B cell (primary cell): ENCODE measurements at regions of chr3 and their contacts with region 1.

Region 1: DNA sequence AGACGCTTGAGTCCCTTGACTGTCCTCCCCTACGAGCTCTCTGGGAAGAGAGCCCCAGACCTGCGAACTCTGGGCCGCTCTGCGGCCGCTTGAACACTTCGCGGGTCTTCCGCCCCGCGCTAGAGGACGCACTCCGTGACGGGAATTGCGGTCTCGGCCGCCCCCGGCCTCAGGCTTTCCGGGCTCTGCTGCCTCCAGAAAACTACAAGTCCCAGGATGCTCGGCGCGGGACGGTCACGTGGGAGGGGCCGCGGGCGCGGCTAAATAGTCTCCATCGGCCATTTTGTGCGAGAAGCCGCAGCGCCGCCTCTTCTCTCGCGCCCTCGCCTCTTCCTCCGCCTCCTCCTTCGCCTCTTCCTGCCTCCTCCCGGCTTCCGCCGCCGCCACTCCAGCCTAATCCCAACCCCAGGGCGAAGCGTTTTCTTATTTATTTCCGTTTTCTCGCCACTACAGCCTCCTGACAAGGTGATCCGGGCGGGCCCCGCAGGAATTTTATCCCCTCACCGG is at the start of gene EIF1B:
- DNase-seq: peak; percentile 98
- ATAC-seq: peak; percentile 87
- H3K4me3 ChIP-seq: peak within 1 kb of the TSS; percentile 77 to 98 (median 90)
- H3K4me3 Mint-ChIP-seq: peak within 1 kb of the TSS; percentile 96
- H3K27ac ChIP-seq: peak within 1 kb of the TSS; percentile 96 to 97
- H3K27ac Mint-ChIP-seq: peak within 1 kb of the TSS; percentile 99
- H3K4me1 ChIP-seq: peaks cover 15 to 20% of the 10 kb centered on the region in 2 donors
- H3K4me1 Mint-ChIP-seq: peaks cover 34% of the 10 kb centered on the region
- H3K27me3 ChIP-seq: no peaks in the 10 kb centered on the region
- H3K27me3 Mint-ChIP-seq: no peaks in the 10 kb centered on the region
- CTCF ChIP-seq: peak; percentile 90
- total RNA-seq, gene EIF1B: 70.6 and 78.1 TPM in 2 replicates

Region 2: DNA sequence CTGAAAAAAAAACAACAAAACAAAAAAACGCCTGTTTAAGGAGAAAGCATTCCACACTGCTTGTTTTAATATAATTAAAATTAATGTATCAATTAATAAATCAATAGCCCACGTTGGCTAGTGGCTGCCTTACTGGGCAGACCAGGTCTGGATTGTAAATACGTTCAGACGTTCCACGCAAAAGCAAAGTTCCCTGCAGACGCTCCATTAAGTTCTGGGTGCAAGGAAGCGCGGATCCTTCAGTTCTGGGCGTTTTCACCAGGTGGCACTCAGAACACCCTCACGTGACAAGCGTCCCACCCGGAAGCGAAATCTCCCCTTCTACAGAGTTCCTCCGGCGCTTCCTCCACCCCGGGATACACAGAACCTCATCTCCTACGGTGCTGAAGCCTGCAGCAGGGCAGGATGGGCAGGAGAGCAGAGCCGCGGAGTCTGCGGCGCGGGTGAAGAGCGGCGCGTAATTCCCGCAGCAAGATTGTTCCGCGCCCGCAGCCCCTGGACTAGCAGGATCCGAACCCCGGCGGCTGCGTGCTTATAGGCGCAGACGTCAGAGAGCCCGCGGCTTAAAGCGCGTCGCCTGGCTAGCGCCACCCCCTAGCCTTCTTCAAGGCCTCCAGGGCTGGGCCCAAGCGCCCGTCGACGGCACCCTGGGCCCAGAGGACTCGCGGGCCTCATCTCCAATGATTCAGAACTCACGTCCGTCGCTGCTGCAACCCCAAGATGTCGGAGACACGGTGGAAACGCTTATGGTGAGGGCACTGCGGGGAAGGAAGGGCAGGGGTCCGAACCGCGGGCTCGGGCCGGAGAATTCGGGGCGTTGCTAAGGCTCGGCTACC is 926.2 kb before region 1 on chr3 and contains the start of gene SLC25A38:
- CTCF ChIA-PET with region 1: no interaction called
- POLR2A ChIA-PET with region 1: no interaction called
- intact Hi-C with region 1: loop called (anchors 1 kb)
- DNase-seq: peak; percentile 93
- ATAC-seq: peak; percentile 71
- H3K4me3 ChIP-seq: peak within 1 kb of the TSS; percentile 4 to 91 (median 83)
- H3K4me3 Mint-ChIP-seq: peak within 1 kb of the TSS; percentile 98
- H3K27ac ChIP-seq: peak within 1 kb of the TSS; percentile 94 to 96
- H3K27ac Mint-ChIP-seq: peak within 1 kb of the TSS; percentile 99
- H3K4me1 ChIP-seq: peaks cover 43 to 50% of the 10 kb centered on the region in 2 donors
- H3K4me1 Mint-ChIP-seq: peaks cover 42% of the 10 kb centered on the region
- H3K27me3 ChIP-seq: no peaks in the 10 kb centered on the region
- H3K27me3 Mint-ChIP-seq: no peaks in the 10 kb centered on the region
- CTCF ChIP-seq: peak; percentile 60
- total RNA-seq, gene SLC25A38: 46.3 and 53.0 TPM in 2 replicates

Region 3: GRCh38 chr3:40287248-40287647 is 22.2 kb before region 1 on chr3:
- CTCF ChIA-PET with region 1: no interaction called
- POLR2A ChIA-PET with region 1: no interaction called
- intact Hi-C with region 1: no loop called
- DNase-seq: no peak
- ATAC-seq: no peak
- H3K4me3 ChIP-seq: no peak overlapping the region
- H3K4me3 Mint-ChIP-seq: no peak overlapping the region
- H3K27ac ChIP-seq: no peak overlapping the region
- H3K27ac Mint-ChIP-seq: no peak overlapping the region
- H3K4me1 ChIP-seq: no peaks in the 10 kb centered on the region
- H3K4me1 Mint-ChIP-seq: no peaks in the 10 kb centered on the region
- H3K27me3 ChIP-seq: no peaks in the 10 kb centered on the region
- H3K27me3 Mint-ChIP-seq: peaks cover 4% of the 10 kb centered on the region
- CTCF ChIP-seq: no peak

Region 4: DNA sequence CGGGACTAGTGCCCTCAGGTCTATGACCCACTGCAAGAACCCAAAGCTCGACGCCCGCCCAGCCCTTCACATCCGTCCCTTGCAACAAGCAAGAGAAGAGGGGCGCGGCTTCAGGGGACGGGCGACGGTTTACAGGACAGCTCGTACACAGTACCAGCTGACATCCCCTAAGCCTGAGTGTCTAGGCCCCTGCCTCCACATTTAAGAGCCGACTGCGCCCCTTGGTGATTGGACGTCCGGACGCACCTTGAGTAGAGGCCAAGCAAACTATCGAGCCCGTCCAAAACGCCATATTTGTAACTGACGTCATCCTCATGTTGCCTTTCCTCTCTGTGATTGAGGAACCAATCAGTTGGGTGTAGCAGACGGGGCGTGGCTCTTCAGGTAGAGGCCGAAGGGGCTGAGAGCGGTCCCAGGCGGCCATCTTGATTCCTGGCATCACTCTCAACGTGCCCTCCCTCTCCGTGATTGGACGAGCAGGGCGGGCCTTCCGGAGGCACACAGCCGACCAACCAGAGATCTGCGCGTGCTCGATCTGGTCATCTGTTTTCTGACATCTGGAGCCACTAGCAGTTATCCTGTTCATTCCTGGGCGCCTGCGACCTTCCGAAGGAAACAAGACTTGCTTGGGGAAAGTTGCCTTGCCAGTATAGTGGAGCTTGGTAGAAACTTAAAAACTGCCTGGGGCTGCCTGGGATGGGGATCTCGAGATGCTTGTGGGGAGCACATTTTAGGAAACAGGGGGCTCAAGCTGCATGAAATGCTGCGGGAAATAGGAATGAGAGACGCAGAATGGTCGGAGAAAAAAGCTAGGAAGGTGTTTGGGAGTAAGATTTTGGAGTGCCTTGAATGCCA is 143.6 kb after region 1 on chr3:
- CTCF ChIA-PET with region 1: interaction called, 3 read pairs
- POLR2A ChIA-PET with region 1: interaction called, 6 read pairs
- intact Hi-C with region 1: loop called (anchors 1 kb)
- DNase-seq: peak; percentile 97
- ATAC-seq: peak; percentile 90
- H3K4me3 ChIP-seq: peak overlapping the region; percentile 60 to 88 (median 77)
- H3K4me3 Mint-ChIP-seq: peak overlapping the region; percentile 96
- H3K27ac ChIP-seq: peak overlapping the region; percentile 92 to 95
- H3K27ac Mint-ChIP-seq: peak overlapping the region; percentile 99
- H3K4me1 ChIP-seq: peaks cover 24 to 28% of the 10 kb centered on the region in 2 donors
- H3K4me1 Mint-ChIP-seq: peaks cover 36% of the 10 kb centered on the region
- H3K27me3 ChIP-seq: no peaks in the 10 kb centered on the region
- H3K27me3 Mint-ChIP-seq: no peaks in the 10 kb centered on the region
- CTCF ChIP-seq: peak; percentile 6

Region 5: DNA sequence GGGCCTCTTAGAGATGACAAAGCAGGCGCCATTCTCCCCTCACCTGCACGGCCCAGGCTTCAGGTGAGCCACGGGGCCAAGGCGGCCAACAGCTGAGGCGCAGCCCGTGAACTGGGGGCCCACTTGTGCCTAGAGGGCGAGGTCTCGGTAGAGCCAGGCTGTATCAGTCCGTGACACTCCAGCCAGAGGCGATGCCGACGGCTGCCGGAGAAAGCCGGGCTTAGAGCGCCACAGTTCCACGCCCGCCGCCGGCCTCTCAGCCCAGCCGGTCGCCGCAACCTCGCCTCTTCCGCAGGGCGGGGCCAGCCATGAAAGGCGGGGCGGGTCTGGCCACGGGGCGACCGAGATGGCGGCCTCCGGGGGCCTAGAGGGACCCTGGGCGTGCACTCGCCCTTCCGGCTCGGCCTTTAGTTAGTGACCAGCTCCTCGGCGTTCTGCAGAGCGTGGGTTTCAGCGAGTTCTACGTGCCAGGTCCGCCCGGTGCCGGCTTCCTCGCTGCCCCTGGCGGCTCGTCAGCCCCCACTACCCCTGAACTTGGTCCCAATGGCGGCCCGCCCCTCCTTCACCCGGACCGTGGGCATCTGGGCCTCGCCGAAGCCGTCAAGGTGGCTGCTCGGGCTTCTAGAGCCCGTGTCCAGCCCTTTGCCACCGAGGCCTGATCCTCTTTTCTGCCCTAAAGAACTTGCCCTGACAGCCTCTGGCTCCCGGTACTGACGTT is 215.3 kb after region 1 on chr3 and contains the start of gene ZNF621:
- CTCF ChIA-PET with region 1: interaction called, 5 read pairs
- POLR2A ChIA-PET with region 1: no interaction called
- intact Hi-C with region 1: loop called (anchors 1 kb)
- DNase-seq: peak; percentile 89
- ATAC-seq: peak; percentile 99
- H3K4me3 ChIP-seq: peak within 1 kb of the TSS; percentile 27 to 94 (median 87)
- H3K4me3 Mint-ChIP-seq: peak within 1 kb of the TSS; percentile 96
- H3K27ac ChIP-seq: peak within 1 kb of the TSS; percentile 86 to 91
- H3K27ac Mint-ChIP-seq: peak within 1 kb of the TSS; percentile 94
- H3K4me1 ChIP-seq: peaks cover 16% of the 10 kb centered on the region in 2 donors
- H3K4me1 Mint-ChIP-seq: peaks cover 24% of the 10 kb centered on the region
- H3K27me3 ChIP-seq: no peaks in the 10 kb centered on the region
- H3K27me3 Mint-ChIP-seq: no peaks in the 10 kb centered on the region
- CTCF ChIP-seq: no peak
- total RNA-seq, gene ZNF621: 34.6 and 35.2 TPM in 2 replicates

Region 6: DNA sequence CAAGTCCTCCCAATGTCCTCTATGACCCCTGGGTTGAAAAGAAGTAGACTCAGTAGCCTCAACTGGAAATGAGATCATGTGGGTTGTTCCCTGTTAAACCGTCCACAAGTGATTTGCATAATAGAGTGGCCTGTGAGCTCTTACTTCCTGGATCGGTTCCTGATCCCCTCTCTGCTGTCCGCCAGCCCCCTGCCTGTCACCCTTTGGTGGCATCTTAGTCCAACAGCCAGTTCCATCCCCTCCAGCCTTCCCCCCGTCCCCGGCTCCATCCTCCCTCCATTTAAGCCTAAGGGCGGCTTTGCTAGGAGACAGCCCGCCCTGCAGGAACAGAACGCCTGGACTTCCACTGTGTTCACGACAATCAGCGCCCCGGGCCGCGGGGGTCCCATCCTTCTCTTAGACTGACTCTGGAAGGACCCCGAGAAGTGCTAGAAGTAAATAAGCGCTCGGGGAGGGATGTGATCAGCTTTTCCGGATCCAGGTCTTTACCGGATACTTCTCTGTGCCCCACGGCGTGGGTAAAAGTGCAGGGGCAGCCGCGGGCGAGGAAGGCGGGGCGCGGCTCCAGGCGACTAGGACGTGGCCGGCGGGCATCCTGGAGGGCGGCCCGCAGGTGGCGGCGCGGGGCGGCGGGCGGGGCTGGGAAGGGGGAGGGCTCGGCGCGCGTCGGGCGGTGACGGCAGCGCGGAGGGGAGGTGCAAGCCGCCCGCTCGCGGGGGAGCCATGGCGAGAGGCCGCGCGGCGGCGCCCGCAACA is 1703.6 kb after region 1 on chr3:
- CTCF ChIA-PET with region 1: interaction called, 3 read pairs
- POLR2A ChIA-PET with region 1: no interaction called
- intact Hi-C with region 1: loop called (anchors 2 kb)
- DNase-seq: peak; percentile 92
- ATAC-seq: peak; percentile 71
- H3K4me3 ChIP-seq: peak overlapping the region; percentile 60 to 96 (median 92)
- H3K4me3 Mint-ChIP-seq: peak overlapping the region; percentile 97
- H3K27ac ChIP-seq: peak overlapping the region; percentile 99 to 100
- H3K27ac Mint-ChIP-seq: peak overlapping the region; percentile 99
- H3K4me1 ChIP-seq: peaks cover 44 to 49% of the 10 kb centered on the region in 2 donors
- H3K4me1 Mint-ChIP-seq: peaks cover 56% of the 10 kb centered on the region
- H3K27me3 ChIP-seq: no peaks in the 10 kb centered on the region
- H3K27me3 Mint-ChIP-seq: no peaks in the 10 kb centered on the region
- CTCF ChIP-seq: no peak